Posterior vena cava (tissue), 2 donors: ENCODE measurements at regions of chr7 and their contacts with region 1.

Region 1: DNA sequence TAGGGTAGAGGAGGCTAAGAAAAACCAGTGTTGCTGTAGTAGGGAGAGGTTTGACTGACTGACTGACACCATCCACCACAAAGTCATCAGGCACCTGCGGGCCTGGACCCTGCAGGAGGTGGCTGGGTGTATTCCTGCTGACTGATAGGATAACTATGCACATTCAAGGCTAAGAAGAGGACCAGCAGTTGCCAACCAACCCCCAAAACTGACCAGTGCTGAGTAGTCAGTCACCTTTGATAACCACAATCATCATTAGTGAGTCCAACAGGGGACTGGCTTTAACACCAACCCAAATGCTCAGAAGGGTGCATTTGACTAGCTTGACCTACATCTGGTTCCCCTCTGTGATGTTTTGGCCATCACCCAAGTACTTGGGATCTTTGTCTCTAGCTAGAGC is 30.5 kb downstream of the PLXNA4 start:
- DNase-seq: no peak

Region 2: DNA sequence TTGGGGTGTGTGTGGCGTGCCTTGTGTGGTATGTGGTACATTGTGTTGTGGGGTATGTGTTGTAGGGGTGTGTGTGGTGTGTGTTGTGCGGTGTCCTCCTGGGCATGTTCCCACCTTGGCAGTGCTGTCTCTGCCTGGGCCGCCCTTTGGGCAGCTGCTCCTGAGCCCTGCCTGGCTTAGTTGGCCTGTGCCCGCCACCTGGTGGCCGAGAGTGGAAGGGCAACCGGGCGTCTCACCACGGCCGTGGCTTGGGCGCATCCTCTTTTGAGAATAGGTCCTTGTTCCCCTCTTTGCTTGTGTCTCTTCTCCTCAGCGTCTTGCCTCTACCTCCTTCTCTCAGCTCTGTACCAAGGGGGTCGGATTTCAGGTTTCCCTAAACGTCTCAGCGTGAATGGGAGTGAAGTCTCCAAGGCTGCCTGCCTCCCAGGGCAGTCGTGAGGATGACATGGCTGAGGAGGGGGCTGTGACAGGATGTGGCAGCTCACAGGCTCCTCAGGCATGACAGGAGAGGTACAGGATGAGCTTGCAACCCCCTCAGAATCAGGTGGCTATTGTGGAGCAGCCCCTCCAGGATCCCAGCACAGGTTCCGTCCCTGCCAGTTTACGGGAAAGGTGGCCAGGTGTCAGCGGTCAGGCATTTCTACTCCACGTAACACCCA is 891.0 kb before region 1 on chr7:
- intact Hi-C with region 1: no loop called
- DNase-seq: peak; percentile 96

Region 3: GRCh38 chr7:132485600-132486273 is 60.0 kb before region 1 on chr7:
- intact Hi-C with region 1: no loop called
- DNase-seq: peak; percentile 88

Region 4: GRCh38 chr7:132709971-132710567 is 164.3 kb after region 1 on chr7:
- intact Hi-C with region 1: loop called in 1 of 2 experiments (anchors 2 kb)
- DNase-seq: no peak